ENCODE measurements at regions of chr16 and their contacts with region 1.

Region 1: GRCh38 chr16:52912565-52913173 is 140.0 kb downstream of the CHD9NB start:
- DNase-seq: peak; percentile 11
- ATAC-seq: peak; percentile 93
- H3K4me3 ChIP-seq: no peak overlapping the region
- H3K27ac ChIP-seq: no peak overlapping the region
- H3K4me1 ChIP-seq: no peaks in the 10 kb centered on the region
- H3K27me3 ChIP-seq: no peaks in the 10 kb centered on the region
- CTCF ChIP-seq: peak; percentile 76 to 84 (median 77)
- EP300 ChIP-seq: no peak
- POLR2A ChIP-seq: no peak
- RAD21 ChIP-seq: peak; percentile 73

Region 2: GRCh38 chr16:51431517-51432241 is 1481.0 kb before region 1 on chr16:
- CTCF ChIA-PET with region 1: no interaction called
- POLR2A ChIA-PET with region 1: no interaction called
- RAD21 ChIA-PET with region 1: no interaction called
- SMC1A ChIA-PET with region 1: no interaction called
- in situ Hi-C with region 1: no loop called
- intact Hi-C with region 1: no loop called
- DNase-seq: no peak
- ATAC-seq: peak; percentile 68
- H3K4me3 ChIP-seq: no peak overlapping the region
- H3K27ac ChIP-seq: no peak overlapping the region
- H3K4me1 ChIP-seq: no peaks in the 10 kb centered on the region
- H3K27me3 ChIP-seq: no peaks in the 10 kb centered on the region
- CTCF ChIP-seq: no peak
- EP300 ChIP-seq: no peak
- POLR2A ChIP-seq: no peak
- RAD21 ChIP-seq: no peak

Region 3: DNA sequence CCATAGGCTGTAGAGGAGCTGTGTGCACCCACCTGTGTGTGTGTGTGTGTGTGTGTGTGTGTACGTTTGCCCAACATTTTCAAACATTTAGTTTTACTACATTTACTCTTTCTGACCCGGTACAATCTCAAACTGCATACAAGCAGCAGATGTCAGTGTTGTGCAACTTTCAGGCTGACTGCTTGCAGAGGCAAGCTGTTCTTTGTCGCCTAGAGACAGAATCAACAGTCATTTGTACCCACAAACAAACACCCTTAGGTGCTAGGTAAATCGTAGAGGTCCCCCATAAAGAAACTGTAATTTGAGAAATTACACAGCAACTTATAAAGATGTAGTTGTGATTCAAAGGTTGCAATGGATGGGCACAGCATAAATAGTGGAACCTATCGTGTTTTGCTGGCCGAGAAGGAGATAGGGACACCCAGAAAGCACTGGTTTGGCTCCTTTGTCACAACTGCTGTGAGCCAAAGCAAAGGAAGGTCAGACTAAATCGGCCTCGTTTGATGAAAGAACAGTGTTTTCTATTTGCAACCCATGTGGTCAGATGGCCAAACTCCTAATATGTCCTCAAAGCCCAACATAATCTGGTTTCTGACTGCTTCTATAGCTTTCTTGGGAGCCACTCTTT is 844.1 kb before region 1 on chr16:
- CTCF ChIA-PET with region 1: interaction called, 28 read pairs
- POLR2A ChIA-PET with region 1: no interaction called
- RAD21 ChIA-PET with region 1: interaction called, 3 read pairs
- SMC1A ChIA-PET with region 1: interaction called, 15 read pairs
- in situ Hi-C with region 1: no loop called
- intact Hi-C with region 1: loop called (anchors 2 kb)
- DNase-seq: no peak
- ATAC-seq: peak; percentile 46
- H3K4me3 ChIP-seq: no peak overlapping the region
- H3K27ac ChIP-seq: no peak overlapping the region
- H3K4me1 ChIP-seq: no peaks in the 10 kb centered on the region
- H3K27me3 ChIP-seq: no peaks in the 10 kb centered on the region
- CTCF ChIP-seq: peak in 1 of 3 experiments; percentile 25; a peak in 1 of 6 replicates
- EP300 ChIP-seq: no peak
- POLR2A ChIP-seq: no peak
- RAD21 ChIP-seq: 0 out of 2 replicates have a peak, but pooled peaks have one; percentile 16

Region 4: GRCh38 chr16:52690468-52690867 is 222.2 kb before region 1 on chr16:
- CTCF ChIA-PET with region 1: no interaction called
- POLR2A ChIA-PET with region 1: no interaction called
- RAD21 ChIA-PET with region 1: no interaction called
- SMC1A ChIA-PET with region 1: no interaction called
- in situ Hi-C with region 1: no loop called
- intact Hi-C with region 1: no loop called
- DNase-seq: no peak
- ATAC-seq: no peak
- H3K4me3 ChIP-seq: no peak overlapping the region
- H3K27ac ChIP-seq: no peak overlapping the region
- H3K4me1 ChIP-seq: no peaks in the 10 kb centered on the region
- H3K27me3 ChIP-seq: no peaks in the 10 kb centered on the region
- CTCF ChIP-seq: no peak
- EP300 ChIP-seq: no peak
- POLR2A ChIP-seq: no peak
- RAD21 ChIP-seq: no peak

Region 5: GRCh38 chr16:52929478-52930400 is 17.1 kb after region 1 on chr16:
- CTCF ChIA-PET with region 1: interaction called, 7 read pairs
- POLR2A ChIA-PET with region 1: no interaction called
- RAD21 ChIA-PET with region 1: no interaction called
- SMC1A ChIA-PET with region 1: interaction called, 18 read pairs
- in situ Hi-C with region 1: no loop called
- intact Hi-C with region 1: no loop called
- DNase-seq: no peak
- ATAC-seq: no peak
- H3K4me3 ChIP-seq: no peak overlapping the region
- H3K27ac ChIP-seq: no peak overlapping the region
- H3K4me1 ChIP-seq: no peaks in the 10 kb centered on the region
- H3K27me3 ChIP-seq: no peaks in the 10 kb centered on the region
- CTCF ChIP-seq: no peak
- EP300 ChIP-seq: no peak
- POLR2A ChIP-seq: no peak
- RAD21 ChIP-seq: no peak

Region 6: DNA sequence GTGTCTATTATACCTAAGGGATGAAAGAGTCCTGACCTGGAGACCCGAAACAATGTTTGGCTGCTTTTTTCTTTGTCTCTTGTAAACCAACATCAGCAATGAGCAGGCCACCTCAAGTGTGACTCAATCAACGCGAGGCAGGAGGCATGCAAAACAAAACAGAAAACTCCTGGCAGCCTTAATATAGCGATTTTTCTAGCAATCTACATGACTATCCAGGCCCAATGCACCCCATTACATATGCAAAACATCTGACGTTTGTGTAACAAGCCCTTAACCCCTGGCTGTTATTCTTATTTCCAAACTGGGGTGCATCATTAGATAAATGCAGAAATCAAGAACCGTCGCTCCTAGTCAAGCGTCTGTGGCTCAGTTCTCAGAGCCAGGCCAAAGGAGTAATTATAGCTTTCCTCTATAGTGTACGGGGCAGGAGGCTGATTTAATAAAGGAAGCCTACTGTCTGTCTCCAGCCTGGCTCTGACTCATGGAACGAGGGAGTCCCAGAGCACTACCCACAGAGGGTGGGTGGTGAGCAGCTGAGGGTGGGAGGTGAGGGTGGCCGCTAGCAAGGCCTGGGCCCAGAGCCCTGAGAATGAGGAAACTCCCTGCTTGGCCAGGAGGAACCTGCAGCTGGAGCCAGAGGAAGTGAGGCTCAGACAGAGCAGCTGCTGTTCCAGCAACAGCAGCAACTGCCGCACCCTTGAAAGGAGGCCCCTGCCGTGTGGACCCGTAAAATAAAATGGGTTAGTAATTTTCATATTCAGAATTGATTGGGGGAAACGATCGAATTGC is 186.1 kb after region 1 on chr16:
- CTCF ChIA-PET with region 1: no interaction called
- POLR2A ChIA-PET with region 1: no interaction called
- RAD21 ChIA-PET with region 1: no interaction called
- SMC1A ChIA-PET with region 1: no interaction called
- in situ Hi-C with region 1: no loop called
- intact Hi-C with region 1: no loop called
- DNase-seq: peak; percentile 66
- ATAC-seq: peak; percentile 81
- H3K4me3 ChIP-seq: peak overlapping the region; percentile 79
- H3K27ac ChIP-seq: peak overlapping the region; percentile 96
- H3K4me1 ChIP-seq: peaks cover 33% of the 10 kb centered on the region
- H3K27me3 ChIP-seq: no peaks in the 10 kb centered on the region
- CTCF ChIP-seq: no peak
- EP300 ChIP-seq: peak; percentile 60 to 74; a peak in 3 of 4 replicates
- POLR2A ChIP-seq: peak; percentile 65
- RAD21 ChIP-seq: no peak